ENCODE measurements at regions of chr10 and their contacts with region 1.

Region 1: DNA sequence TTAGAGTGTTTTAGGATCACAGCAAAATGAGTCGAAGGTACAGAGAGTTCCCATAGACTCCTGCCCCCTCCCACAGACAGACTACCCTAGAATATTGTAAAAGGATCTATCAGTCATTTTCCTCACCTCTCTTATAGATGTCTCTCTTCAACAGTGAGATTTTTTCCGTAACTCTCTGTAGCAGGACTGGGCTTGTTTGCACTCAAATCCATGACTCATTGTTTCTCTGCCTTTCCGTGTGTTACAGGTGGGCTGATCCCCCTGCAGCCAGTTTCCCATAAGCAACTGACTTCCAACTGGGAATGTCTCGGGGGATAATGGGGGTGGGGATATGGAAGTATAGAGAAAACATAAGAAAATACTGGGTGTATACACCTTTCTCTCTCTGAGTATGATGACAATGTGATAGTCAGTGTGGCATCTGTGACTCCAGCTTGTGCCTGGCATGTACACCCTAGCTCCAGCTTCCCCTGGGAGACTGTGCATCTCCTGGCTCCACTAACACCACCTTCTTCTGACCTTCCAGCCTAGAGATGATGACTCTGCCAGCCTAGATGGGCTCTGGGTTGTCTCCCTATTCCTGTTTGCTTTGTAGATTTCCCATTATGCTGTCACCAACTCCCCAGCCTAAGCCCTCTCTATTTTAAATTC is 921.2 kb downstream of the GATA3 start:
- DNase-seq: peak; percentile 73
- H3K4me3 Mint-ChIP-seq: no peak overlapping the region
- H3K27ac Mint-ChIP-seq: peak overlapping the region; percentile 44
- H3K4me1 Mint-ChIP-seq: peaks cover 22% of the 10 kb centered on the region
- H3K27me3 Mint-ChIP-seq: no peaks in the 10 kb centered on the region
- CTCF ChIP-seq: no peak

Region 2: DNA sequence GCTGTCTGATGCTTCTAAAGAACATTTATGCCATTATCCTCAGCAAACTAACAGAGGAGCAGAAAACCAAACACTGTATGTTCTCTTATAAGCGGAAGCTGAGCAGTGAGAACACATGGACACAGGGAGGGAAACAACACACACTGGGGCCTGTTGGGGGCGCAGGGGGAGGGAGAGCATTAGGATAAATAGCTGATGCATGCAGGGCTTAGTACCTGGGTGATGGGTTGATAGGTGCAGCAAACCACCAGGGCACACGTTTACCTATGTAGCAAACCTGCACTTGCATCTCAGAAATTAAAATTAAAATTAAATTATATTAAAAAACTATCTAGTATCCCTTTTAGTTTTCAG is 67.6 kb before region 1 on chr10:
- CTCF ChIA-PET with region 1: interaction called, 11 read pairs
- POLR2A ChIA-PET with region 1: interaction called, 9 read pairs
- intact Hi-C with region 1: no loop called
- DNase-seq: no peak
- H3K4me3 Mint-ChIP-seq: no peak overlapping the region
- H3K27ac Mint-ChIP-seq: no peak overlapping the region
- H3K4me1 Mint-ChIP-seq: peaks cover 8% of the 10 kb centered on the region
- H3K27me3 Mint-ChIP-seq: no peaks in the 10 kb centered on the region
- CTCF ChIP-seq: no peak

Region 3: GRCh38 chr10:8927705-8928104 is 48.0 kb before region 1 on chr10:
- CTCF ChIA-PET with region 1: interaction called, 3 read pairs
- POLR2A ChIA-PET with region 1: interaction called, 20 read pairs
- intact Hi-C with region 1: no loop called
- DNase-seq: peak; percentile 90
- H3K4me3 Mint-ChIP-seq: peak overlapping the region; percentile 24
- H3K27ac Mint-ChIP-seq: peak overlapping the region; percentile 60
- H3K4me1 Mint-ChIP-seq: peaks cover 22% of the 10 kb centered on the region
- H3K27me3 Mint-ChIP-seq: no peaks in the 10 kb centered on the region
- CTCF ChIP-seq: no peak

Region 4: DNA sequence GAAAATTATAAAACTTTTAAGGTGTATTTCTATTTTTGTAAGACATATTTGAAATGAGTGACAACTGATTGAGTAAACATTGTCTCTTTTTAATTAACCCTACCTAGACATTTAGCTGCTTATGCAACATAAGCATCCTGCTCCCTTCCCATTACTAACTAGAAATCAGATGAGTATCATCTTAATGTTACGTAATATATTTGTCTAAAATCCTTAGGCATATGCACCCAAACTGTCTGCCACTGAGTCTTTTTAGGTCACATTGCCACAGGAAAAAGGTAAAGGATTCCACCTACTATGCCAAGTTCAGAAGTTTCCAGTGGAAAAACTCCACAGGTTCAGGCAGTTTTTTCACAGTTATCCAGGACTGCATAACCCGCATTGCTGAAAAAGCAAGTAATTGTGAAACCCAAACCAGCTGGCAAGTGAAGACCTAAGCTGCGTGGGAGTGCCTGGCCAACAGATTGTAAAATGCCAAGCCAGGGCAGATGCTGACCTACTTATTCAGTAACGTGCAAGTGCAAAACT is 62.5 kb after region 1 on chr10:
- CTCF ChIA-PET with region 1: no interaction called
- POLR2A ChIA-PET with region 1: interaction called, 10 read pairs
- intact Hi-C with region 1: no loop called
- DNase-seq: peak; percentile 61
- H3K4me3 Mint-ChIP-seq: no peak overlapping the region
- H3K27ac Mint-ChIP-seq: no peak overlapping the region
- H3K4me1 Mint-ChIP-seq: peaks cover 5% of the 10 kb centered on the region
- H3K27me3 Mint-ChIP-seq: no peaks in the 10 kb centered on the region
- CTCF ChIP-seq: no peak

Region 5: GRCh38 chr10:9215121-9215520 is 239.5 kb after region 1 on chr10:
- CTCF ChIA-PET with region 1: no interaction called
- POLR2A ChIA-PET with region 1: no interaction called
- intact Hi-C with region 1: no loop called
- DNase-seq: no peak
- H3K4me3 Mint-ChIP-seq: no peak overlapping the region
- H3K27ac Mint-ChIP-seq: no peak overlapping the region
- H3K4me1 Mint-ChIP-seq: no peaks in the 10 kb centered on the region
- H3K27me3 Mint-ChIP-seq: no peaks in the 10 kb centered on the region
- CTCF ChIP-seq: no peak

Region 6: GRCh38 chr10:9634466-9634865 is 658.8 kb after region 1 on chr10:
- CTCF ChIA-PET with region 1: no interaction called
- POLR2A ChIA-PET with region 1: no interaction called
- intact Hi-C with region 1: no loop called
- DNase-seq: peak; percentile 42
- H3K4me3 Mint-ChIP-seq: no peak overlapping the region
- H3K27ac Mint-ChIP-seq: no peak overlapping the region
- H3K4me1 Mint-ChIP-seq: no peaks in the 10 kb centered on the region
- H3K27me3 Mint-ChIP-seq: no peaks in the 10 kb centered on the region
- CTCF ChIP-seq: no peak